ENCODE measurements at regions of chr1 and their contacts with region 1.

Region 1: DNA sequence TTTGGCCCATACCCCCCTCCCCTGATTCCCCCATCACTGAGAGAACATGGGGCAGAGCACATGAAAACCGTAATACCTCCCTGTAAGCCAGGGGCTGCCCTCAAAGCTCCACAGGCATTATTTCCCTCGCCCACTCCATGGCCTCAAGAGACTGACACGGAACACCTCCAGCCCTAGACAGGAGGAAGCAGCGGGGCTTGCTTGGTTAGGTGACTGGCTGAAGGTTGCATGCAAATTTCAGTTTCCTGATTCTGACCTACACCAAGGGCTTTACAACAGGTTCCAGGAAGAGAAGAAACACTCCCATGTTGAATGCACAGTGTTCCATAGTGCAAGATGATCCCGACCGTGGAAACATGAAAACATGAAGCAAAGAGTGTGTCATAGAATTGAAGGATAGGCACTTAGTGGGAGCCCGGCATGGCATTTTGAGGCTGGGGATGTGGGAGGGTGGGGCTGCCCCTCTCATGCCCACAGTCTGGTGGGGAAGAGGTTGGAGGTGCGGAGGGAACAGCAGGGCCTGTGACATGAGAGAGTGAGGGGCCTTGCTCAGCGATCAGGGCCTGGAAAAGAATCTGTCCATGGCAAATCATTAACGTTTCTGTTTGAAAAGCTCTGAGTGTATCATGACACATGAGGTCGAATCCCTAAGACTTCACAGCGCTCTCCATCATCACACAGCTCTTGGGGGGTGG is 33.5 kb downstream of the GPR137B start:
- DNase-seq: no peak
- ATAC-seq: no peak

Region 2: GRCh38 chr1:236113324-236114032 is 62.3 kb before region 1 on chr1:
- intact Hi-C with region 1: loop called in 1 of 2 experiments (anchors 5 kb)
- DNase-seq: no peak
- ATAC-seq: peak; percentile 72 to 73

Measured in left cardiac atrium (tissue), 4 donors.